CD8-positive, alpha-beta memory T cell (primary cell): ENCODE measurements at regions of chr7 and their contacts with region 1.

Region 1: DNA sequence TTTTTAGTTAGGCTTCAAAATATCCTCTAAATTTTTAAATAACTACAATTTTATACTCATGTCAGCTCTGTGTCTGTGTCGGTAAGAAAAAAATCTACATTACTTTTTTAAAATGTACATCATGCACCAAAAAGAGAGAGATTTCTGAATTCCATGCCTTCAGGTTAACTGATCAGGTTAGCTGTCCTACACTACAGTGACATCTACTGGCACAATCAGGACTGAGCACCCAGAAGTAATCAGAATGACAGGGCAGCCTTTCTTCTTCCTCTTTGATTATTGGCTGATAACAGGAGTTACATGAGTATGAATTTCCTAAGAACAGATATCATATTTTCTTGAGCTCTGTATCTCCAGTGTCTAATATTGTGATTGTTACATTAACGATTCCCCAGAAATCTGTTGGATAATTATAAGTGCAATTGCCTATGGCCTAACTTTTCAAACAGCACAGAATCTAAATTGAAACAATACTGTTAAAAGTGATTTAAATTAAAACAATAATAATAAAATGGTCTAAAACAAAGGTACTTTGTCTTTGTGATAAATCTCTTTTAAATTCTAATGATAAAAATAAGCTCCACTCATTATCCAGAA is 41.8 kb upstream of the HYCC1 start:
- DNase-seq: peak; percentile 6 to 67 (median 58)
- H3K4me3 ChIP-seq: no peak overlapping the region
- H3K4me3 Mint-ChIP-seq: no peak overlapping the region
- H3K27ac ChIP-seq: no peak overlapping the region
- H3K27ac Mint-ChIP-seq: no peak overlapping the region
- H3K4me1 ChIP-seq: no peaks in the 10 kb centered on the region
- H3K4me1 Mint-ChIP-seq: no peaks in the 10 kb centered on the region
- H3K27me3 ChIP-seq: no peaks in the 10 kb centered on the region
- H3K27me3 Mint-ChIP-seq: no peaks in the 10 kb centered on the region

Region 2: DNA sequence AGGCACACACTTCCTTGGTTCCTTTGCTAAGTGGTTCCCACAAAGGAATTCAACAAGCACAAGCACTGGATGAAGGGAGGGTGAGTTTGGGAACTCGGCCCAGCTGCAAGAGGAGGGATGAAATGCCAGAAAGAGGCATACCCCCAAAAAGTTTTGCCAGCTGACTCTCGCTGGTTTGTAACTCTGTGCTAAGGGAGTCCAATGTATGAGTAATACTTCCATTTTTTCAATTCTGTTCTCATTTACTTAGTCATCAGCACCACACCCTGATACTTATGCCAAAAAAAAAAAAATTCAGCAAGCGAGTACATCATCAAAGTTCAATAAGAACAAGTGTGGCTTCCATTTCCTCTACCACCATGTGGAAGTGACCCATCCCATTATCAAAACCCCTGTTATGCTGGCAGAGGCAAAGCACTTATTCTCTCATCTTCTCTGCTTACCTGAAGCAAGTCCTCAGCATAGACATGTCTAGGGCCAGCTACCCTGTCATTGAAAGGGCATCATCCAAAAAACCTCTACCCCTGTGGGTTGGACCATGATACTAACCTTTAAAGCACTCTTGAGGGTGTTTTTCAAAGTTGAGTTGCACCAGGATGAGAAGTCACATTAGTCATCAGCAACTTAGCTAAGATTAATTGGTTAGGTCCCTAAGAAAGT is 34.8 kb before region 1 on chr7:
- CTCF ChIA-PET with region 1: interaction called, 15 read pairs
- POLR2A ChIA-PET with region 1: no interaction called
- DNase-seq: peak in 1 of 5 donors; percentile 18
- H3K4me3 ChIP-seq: no peak overlapping the region
- H3K4me3 Mint-ChIP-seq: peak overlapping the region in 1 of 7 donors; percentile 27
- H3K27ac ChIP-seq: no peak overlapping the region
- H3K27ac Mint-ChIP-seq: peak overlapping the region in 2 of 8 donors; percentile 9 to 43
- H3K4me1 ChIP-seq: peaks cover 4% of the 10 kb centered on the region
- H3K4me1 Mint-ChIP-seq: peaks cover 9 to 33% (median 30%) of the 10 kb centered on the region in 3 donors
- H3K27me3 ChIP-seq: no peaks in the 10 kb centered on the region
- H3K27me3 Mint-ChIP-seq: peaks cover 6 to 10% of the 10 kb centered on the region in 2 donors

Region 3: DNA sequence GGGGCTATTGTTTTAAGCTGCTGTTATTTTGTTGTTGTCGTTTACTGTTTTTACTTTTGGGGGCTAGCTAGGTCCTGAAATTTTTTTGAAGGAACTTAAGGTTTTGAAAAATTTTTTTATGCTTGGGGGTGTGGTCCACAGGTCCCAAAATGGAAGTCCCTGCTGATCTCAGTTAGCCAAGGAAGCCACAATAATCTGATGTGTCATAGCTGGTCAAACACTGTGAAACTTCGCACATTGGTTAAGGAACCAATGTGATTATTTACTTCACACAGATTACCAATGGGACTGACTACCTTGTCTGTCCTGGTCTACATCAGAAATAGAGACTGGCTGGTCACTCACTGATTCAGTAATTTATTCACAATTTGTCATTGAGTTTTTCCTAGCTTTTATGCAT is 12.2 kb before region 1 on chr7:
- CTCF ChIA-PET with region 1: interaction called, 10 read pairs
- POLR2A ChIA-PET with region 1: no interaction called
- DNase-seq: no peak
- H3K4me3 ChIP-seq: no peak overlapping the region
- H3K4me3 Mint-ChIP-seq: no peak overlapping the region
- H3K27ac ChIP-seq: no peak overlapping the region
- H3K27ac Mint-ChIP-seq: peak overlapping the region in 1 of 8 donors; percentile 24
- H3K4me1 ChIP-seq: no peaks in the 10 kb centered on the region
- H3K4me1 Mint-ChIP-seq: no peaks in the 10 kb centered on the region
- H3K27me3 ChIP-seq: no peaks in the 10 kb centered on the region
- H3K27me3 Mint-ChIP-seq: peaks cover 0 to 3% of the 10 kb centered on the region in 2 donors